H1 (cell line): ENCODE measurements at regions of chr13 and their contacts with region 1.

Region 1: GRCh38 chr13:99955747-99956472 is 15.7 kb downstream of the ZIC5 start:
- DNase-seq: peak in 1 of 2 experiments; percentile 72
- H3K4me3 ChIP-seq: peak overlapping the region; percentile 45 to 69 (median 60)
- H3K27ac ChIP-seq: no peak overlapping the region
- H3K4me1 ChIP-seq: peaks cover 7 to 35% (median 20%) of the 10 kb centered on the region in 4 experiments
- H3K27me3 ChIP-seq: peaks cover 12 to 58% (median 47%) of the 10 kb centered on the region in 4 experiments; a peak in 6 of 7 replicates
- CTCF ChIP-seq: no peak
- EP300 ChIP-seq: no peak
- POLR2A ChIP-seq: no peak
- RAD21 ChIP-seq: no peak

Region 2: DNA sequence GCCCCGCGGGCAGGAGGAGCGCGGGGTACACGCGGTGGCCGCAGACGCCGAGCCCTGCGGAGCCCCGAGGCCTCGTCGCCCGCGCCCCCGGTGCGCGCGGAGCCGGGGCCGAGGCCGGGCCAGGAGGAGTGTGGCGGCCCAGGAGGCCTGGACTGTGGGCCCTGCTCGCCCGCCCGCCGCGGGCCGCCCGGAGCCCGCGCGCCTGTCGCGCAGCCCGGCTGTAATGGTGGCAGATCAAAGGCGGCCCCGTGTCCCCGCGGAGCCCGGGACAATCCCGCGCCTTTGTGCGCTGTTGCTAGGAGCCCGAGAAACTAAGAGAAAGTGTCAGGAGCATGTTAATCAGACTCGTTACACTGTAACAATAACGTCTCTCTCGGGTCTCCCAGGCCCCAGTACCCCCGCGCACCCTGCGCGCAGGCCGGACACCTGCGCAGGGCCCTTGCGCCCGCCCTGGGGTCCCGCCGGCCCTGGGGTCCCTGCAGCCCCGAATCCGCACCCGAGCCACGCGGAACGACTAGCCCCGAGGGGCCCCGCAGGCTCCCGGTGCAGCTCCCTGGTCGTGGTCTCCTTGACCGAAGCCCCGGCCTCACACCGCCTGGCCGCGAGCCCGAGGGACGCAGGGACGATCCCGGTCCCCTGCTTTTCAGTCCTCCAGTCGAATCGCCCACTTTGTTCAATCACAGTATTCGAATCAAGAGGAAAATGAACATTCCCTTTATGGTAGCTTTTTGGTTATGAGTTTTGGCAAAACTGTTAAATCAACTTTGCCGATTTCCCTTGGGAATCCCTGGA is 59.7 kb before region 1 on chr13:
- CTCF ChIA-PET with region 1: interaction called, 29 read pairs
- POLR2A ChIA-PET with region 1: interaction called, 4 read pairs
- DNase-seq: peak in 1 of 2 experiments; percentile 65
- H3K4me3 ChIP-seq: peak overlapping the region; percentile 25 to 54 (median 34); a peak in 5 of 8 replicates
- H3K27ac ChIP-seq: no peak overlapping the region
- H3K4me1 ChIP-seq: peaks cover 9 to 29% (median 18%) of the 10 kb centered on the region in 4 experiments
- H3K27me3 ChIP-seq: peaks cover 0 to 24% (median 19%) of the 10 kb centered on the region in 4 experiments; a peak in 5 of 7 replicates
- CTCF ChIP-seq: no peak
- EP300 ChIP-seq: no peak
- POLR2A ChIP-seq: no peak
- RAD21 ChIP-seq: no peak

Region 3: DNA sequence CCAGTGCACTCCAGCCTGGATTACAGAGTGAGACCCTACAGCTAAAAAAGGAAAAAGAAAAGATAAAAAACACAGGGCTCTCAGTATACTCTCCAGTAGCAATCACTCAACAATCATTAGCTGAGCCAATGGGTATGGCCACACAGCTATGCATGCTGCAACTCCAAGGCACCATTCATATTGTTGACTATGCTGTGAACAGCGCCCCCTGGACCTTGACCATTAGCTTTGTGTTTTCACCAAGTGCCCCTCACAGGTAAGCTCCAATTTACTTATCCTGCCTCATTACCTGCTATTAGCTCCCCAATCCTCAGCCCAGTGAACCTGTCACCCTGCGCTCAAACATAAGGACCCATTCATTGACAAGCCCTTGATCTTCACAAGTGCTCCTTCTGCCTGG is 20.1 kb before region 1 on chr13:
- CTCF ChIA-PET with region 1: interaction called, 23 read pairs
- POLR2A ChIA-PET with region 1: interaction called, 3 read pairs
- DNase-seq: peak in 1 of 2 experiments; percentile 60
- H3K4me3 ChIP-seq: no peak overlapping the region
- H3K27ac ChIP-seq: no peak overlapping the region
- H3K4me1 ChIP-seq: peaks cover 0 to 4% (median 2%) of the 10 kb centered on the region in 4 experiments; a peak in 3 of 7 replicates
- H3K27me3 ChIP-seq: no peaks in the 10 kb centered on the region
- CTCF ChIP-seq: peak; percentile 34 to 71 (median 52); a peak in 3 of 4 replicates
- EP300 ChIP-seq: no peak
- POLR2A ChIP-seq: no peak
- RAD21 ChIP-seq: peak; percentile 21 to 49; a peak in 2 of 4 replicates

Region 4: DNA sequence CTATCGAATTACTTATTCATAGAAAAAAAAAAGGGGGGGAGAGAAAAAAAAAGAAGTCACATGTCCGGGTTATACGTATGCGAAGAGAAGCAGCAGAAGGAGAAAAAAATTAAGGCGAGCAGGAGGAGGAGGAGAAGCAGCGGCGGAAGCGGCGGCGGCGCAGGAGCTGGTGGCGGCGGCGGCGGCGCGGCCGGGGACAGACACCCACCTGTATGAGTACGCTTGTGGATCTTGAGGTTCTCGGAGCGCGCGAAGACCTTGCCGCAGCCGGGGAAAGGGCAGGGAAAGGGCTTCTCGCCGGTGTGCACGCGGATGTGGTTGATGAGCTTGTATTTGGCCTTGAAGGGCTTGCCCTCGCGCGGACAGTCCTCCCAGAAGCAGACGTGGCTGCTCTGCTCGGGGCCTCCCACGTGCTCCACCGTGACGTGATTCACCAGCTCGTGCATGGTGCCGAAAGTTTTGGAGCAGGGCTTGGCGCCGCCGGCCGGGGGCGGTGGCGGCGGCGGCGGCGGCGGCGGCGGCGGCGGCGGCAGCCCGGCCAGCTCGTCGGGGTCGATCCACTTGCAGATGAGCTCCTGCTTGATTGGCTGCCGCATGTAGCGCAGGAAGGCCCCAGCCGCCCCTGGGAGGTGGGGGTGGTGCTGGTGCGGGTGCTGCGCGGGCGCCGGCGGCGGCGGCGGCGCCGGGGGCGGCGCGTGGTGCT is 14.2 kb after region 1 on chr13:
- CTCF ChIA-PET with region 1: interaction called, 23 read pairs
- POLR2A ChIA-PET with region 1: interaction called, 71 read pairs
- DNase-seq: peak in 1 of 2 experiments; percentile 76
- H3K4me3 ChIP-seq: peak overlapping the region; percentile 79 to 96 (median 92)
- H3K27ac ChIP-seq: peak overlapping the region; percentile 64; the same call in 1 of the 2 replicates
- H3K4me1 ChIP-seq: peaks cover 7 to 23% (median 15%) of the 10 kb centered on the region in 4 experiments
- H3K27me3 ChIP-seq: no peaks in the 10 kb centered on the region
- CTCF ChIP-seq: no peak
- EP300 ChIP-seq: peak in 1 of 2 experiments; percentile 54; a peak in 1 of 3 replicates
- POLR2A ChIP-seq: no peak
- RAD21 ChIP-seq: no peak

Region 5: GRCh38 chr13:99990126-99990977 is 34.4 kb after region 1 on chr13:
- CTCF ChIA-PET with region 1: interaction called, 10 read pairs
- POLR2A ChIA-PET with region 1: interaction called, 80 read pairs
- DNase-seq: peak in 1 of 2 experiments; percentile 81
- H3K4me3 ChIP-seq: peak overlapping the region; percentile 31 to 72 (median 40)
- H3K27ac ChIP-seq: no peak overlapping the region
- H3K4me1 ChIP-seq: peaks cover 8 to 35% (median 25%) of the 10 kb centered on the region in 4 experiments
- H3K27me3 ChIP-seq: peaks cover 3 to 75% (median 45%) of the 10 kb centered on the region in 4 experiments; a peak in 6 of 7 replicates
- CTCF ChIP-seq: no peak
- EP300 ChIP-seq: no peak
- POLR2A ChIP-seq: no peak
- RAD21 ChIP-seq: no peak

Region 6: DNA sequence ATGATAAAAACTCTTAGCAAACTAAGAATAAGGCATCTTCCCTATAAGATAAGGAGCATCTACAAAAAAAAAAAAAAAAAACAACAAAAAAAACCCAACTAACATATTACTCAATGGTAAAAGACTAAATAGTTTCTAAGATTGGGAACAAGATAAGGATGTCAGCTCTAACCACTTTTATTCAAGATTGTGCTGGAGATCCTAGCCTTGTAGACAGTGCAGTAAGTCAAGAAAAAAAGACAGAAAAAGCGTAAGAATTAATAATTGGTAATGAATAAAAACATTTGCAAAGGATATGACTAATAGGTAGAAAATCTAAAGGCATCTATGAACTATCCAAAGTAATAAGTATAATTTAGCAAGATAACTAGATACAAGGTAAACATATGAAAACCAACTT is 58.7 kb after region 1 on chr13:
- CTCF ChIA-PET with region 1: no interaction called
- POLR2A ChIA-PET with region 1: no interaction called
- DNase-seq: no peak
- H3K4me3 ChIP-seq: no peak overlapping the region
- H3K27ac ChIP-seq: no peak overlapping the region
- H3K4me1 ChIP-seq: no peaks in the 10 kb centered on the region
- H3K27me3 ChIP-seq: no peaks in the 10 kb centered on the region; a peak in 1 of 7 replicates
- CTCF ChIP-seq: no peak
- EP300 ChIP-seq: no peak
- POLR2A ChIP-seq: no peak
- RAD21 ChIP-seq: no peak